B cell (primary cell): ENCODE measurements at regions of chr14 and their contacts with region 1.

Region 1: DNA sequence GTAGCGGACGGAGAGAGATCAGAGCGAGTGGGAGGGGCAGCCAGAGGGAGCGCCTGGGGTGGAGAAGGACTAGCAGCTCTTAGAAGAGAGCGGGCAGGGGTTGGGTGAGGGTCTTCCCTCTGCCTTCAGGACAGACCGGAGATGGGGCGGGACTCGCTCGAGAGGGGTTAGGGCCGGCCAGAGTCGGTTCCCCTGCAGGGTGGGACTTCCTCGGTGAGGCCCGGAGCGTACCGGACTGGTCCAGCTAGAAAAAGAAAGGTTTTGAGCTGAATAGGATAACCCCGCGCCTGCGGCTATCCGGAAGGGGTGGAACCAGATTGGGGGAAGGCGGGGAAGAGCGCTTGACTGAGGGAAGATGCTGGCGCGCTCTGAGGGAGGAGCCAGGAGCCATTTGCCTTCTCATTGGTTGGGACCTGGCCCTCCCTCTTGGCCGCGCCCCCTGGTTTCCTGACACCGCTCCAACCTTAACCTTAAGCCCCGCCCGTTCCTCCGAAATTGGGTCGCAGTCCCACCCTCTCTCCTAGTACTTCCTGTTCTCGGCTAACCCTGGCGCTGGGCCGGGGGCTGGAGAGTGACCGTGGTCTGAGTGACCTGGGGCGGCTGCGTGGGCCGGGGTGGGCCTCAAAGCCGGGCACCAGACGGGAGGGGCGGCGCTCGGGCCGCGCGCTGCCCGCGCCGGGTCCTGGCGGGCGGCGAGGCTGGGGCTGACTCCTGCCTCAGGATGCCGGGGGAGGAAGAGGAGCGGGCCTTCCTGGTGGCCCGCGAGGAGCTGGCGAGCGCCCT is at the start of gene RNF31:
- DNase-seq: peak; percentile 98
- ATAC-seq: peak; percentile 84
- H3K4me3 ChIP-seq: peak within 1 kb of the TSS; percentile 83 to 95 (median 94)
- H3K4me3 Mint-ChIP-seq: peak within 1 kb of the TSS; percentile 95
- H3K27ac ChIP-seq: peak within 1 kb of the TSS; percentile 77 to 90
- H3K27ac Mint-ChIP-seq: peak within 1 kb of the TSS; percentile 95
- H3K4me1 ChIP-seq: peaks cover 21 to 35% of the 10 kb centered on the region in 2 donors
- H3K4me1 Mint-ChIP-seq: peaks cover 50% of the 10 kb centered on the region
- H3K27me3 ChIP-seq: no peaks in the 10 kb centered on the region
- H3K27me3 Mint-ChIP-seq: no peaks in the 10 kb centered on the region
- CTCF ChIP-seq: no peak
- total RNA-seq, gene RNF31: 103 and 114 TPM in 2 replicates

Region 2: DNA sequence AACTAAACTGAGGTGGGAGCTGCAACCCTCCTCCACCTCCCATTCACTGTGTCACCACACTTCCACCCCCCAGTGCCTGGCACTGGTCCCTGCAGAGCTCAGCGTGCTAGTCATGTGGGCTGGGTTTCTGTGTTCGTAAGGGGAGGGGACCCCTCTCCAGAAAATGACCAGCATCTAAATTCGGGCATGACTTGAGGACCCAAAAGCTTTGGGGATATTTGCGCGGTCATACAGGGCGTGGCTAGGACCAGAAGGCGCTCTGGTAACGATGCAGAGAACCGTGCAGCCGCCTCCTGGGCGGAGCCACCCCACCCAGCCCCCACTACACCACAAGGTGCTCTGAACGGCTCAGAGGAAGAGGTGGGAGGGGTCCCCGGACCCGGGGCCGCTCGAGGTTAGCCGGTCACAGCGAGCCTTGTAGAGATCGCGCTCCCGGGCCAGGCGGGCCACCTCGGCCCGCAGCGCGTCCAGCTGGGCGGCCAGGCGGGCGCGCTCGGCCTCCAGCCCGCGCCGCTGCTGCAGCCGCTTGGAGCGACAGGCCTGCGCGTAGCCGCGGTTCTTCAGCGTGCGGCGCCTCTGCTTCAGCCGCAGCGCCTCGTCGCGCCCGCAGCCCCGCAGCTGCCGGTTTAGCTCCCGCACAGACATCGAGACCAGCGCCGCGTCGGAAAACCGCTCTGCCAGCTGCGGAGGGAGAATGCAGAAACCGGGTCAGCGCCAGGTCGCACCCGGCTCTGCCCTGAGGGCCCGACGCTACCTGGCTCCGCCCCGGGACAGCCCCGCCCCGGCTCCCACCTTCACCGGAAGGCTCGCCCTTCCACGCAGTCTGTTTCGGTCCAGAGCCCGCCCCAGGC is 66.1 kb before region 1 on chr14:
- CTCF ChIA-PET with region 1: interaction called, 5 read pairs
- POLR2A ChIA-PET with region 1: no interaction called
- intact Hi-C with region 1: loop called (anchors 1 kb)
- DNase-seq: peak; percentile 82
- ATAC-seq: peak; percentile 93
- H3K4me3 ChIP-seq: peak overlapping the region; percentile 48 to 78 (median 64)
- H3K4me3 Mint-ChIP-seq: peak overlapping the region; percentile 86
- H3K27ac ChIP-seq: peak overlapping the region; percentile 75 to 77
- H3K27ac Mint-ChIP-seq: peak overlapping the region; percentile 91
- H3K4me1 ChIP-seq: peaks cover 19 to 24% of the 10 kb centered on the region in 2 donors
- H3K4me1 Mint-ChIP-seq: peaks cover 30% of the 10 kb centered on the region
- H3K27me3 ChIP-seq: no peaks in the 10 kb centered on the region
- H3K27me3 Mint-ChIP-seq: no peaks in the 10 kb centered on the region
- CTCF ChIP-seq: no peak

Region 3: DNA sequence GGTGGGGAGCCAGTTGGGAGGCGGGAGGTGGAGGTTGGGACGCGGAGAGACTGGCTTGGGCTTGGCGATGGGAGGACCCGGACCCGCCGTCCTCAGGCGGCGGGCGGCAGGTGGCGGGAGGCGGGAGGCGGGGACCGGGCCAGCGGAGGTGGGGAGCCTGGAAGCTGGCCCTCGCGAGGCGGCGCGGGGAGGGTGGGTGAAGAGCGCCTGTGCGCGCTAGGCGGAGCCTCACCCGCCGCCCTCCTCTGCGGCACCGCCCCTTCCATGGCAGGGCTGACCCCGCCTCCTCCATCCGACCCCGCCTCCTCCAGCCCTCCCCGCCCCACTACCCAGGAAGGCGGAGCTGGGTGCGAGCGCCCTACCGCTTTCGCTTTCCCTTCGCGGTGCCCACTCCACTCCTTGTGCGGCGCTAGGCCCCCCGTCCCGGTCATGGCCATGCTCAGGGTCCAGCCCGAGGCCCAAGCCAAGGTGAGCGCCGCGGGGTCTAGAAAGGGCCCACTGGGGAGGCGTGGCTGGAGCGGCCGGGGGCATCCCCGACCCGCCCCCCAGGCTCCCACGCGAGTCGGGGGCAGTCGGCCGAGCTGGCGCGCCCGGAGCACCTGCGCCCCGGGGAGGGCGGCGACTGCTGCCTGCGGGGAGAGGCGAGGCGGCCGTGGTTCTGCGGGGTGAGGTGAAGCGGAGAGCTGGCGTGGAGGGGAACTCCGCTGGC is 11.2 kb before region 1 on chr14 and contains the start of gene PSME1:
- CTCF ChIA-PET with region 1: interaction called, 13 read pairs
- POLR2A ChIA-PET with region 1: interaction called, 43 read pairs
- intact Hi-C with region 1: loop called (anchors 1 kb)
- DNase-seq: peak; percentile 96
- ATAC-seq: peak; percentile 97
- H3K4me3 ChIP-seq: peak within 1 kb of the TSS; percentile 54 to 96 (median 78)
- H3K4me3 Mint-ChIP-seq: peak within 1 kb of the TSS; percentile 92
- H3K27ac ChIP-seq: peak within 1 kb of the TSS; percentile 87 to 97
- H3K27ac Mint-ChIP-seq: peak within 1 kb of the TSS; percentile 94
- H3K4me1 ChIP-seq: peaks cover 33 to 43% of the 10 kb centered on the region in 2 donors
- H3K4me1 Mint-ChIP-seq: peaks cover 57% of the 10 kb centered on the region
- H3K27me3 ChIP-seq: no peaks in the 10 kb centered on the region
- H3K27me3 Mint-ChIP-seq: no peaks in the 10 kb centered on the region
- CTCF ChIP-seq: no peak
- total RNA-seq, gene PSME1: 227 and 237 TPM in 2 replicates

Region 4: GRCh38 chr14:24188251-24189058 is 41.3 kb after region 1 on chr14 and contains the start of gene IPO4:
- CTCF ChIA-PET with region 1: interaction called, 3 read pairs
- POLR2A ChIA-PET with region 1: interaction called, 4 read pairs
- intact Hi-C with region 1: loop called (anchors 1 kb)
- DNase-seq: peak; percentile 96
- ATAC-seq: peak; percentile 93
- H3K4me3 ChIP-seq: peak within 1 kb of the TSS; percentile 32 to 79 (median 70)
- H3K4me3 Mint-ChIP-seq: peak within 1 kb of the TSS; percentile 93
- H3K27ac ChIP-seq: peak within 1 kb of the TSS; percentile 63 to 86
- H3K27ac Mint-ChIP-seq: peak within 1 kb of the TSS; percentile 87
- H3K4me1 ChIP-seq: peaks cover 14 to 17% of the 10 kb centered on the region in 2 donors
- H3K4me1 Mint-ChIP-seq: peaks cover 35% of the 10 kb centered on the region
- H3K27me3 ChIP-seq: no peaks in the 10 kb centered on the region
- H3K27me3 Mint-ChIP-seq: no peaks in the 10 kb centered on the region
- CTCF ChIP-seq: no peak
- total RNA-seq, gene IPO4: 29.8 and 35.0 TPM in 2 replicates

Region 5: GRCh38 chr14:24232121-24232644 is 85.0 kb after region 1 on chr14 and contains the start of gene NEDD8:
- CTCF ChIA-PET with region 1: no interaction called
- POLR2A ChIA-PET with region 1: interaction called, 3 read pairs
- intact Hi-C with region 1: loop called (anchors 2 kb)
- DNase-seq: peak; percentile 95
- ATAC-seq: peak; percentile 86
- H3K4me3 ChIP-seq: peak within 1 kb of the TSS; percentile 75 to 100 (median 97)
- H3K4me3 Mint-ChIP-seq: peak within 1 kb of the TSS; percentile 96
- H3K27ac ChIP-seq: peak within 1 kb of the TSS; percentile 36 to 67
- H3K27ac Mint-ChIP-seq: peak within 1 kb of the TSS; percentile 95
- H3K4me1 ChIP-seq: peaks cover 18 to 24% of the 10 kb centered on the region in 2 donors
- H3K4me1 Mint-ChIP-seq: peaks cover 55% of the 10 kb centered on the region
- H3K27me3 ChIP-seq: no peaks in the 10 kb centered on the region
- H3K27me3 Mint-ChIP-seq: no peaks in the 10 kb centered on the region
- CTCF ChIP-seq: no peak
- total RNA-seq, gene NEDD8: 86.6 and 98.5 TPM in 2 replicates